AG04450 (cell line): ENCODE measurements at regions of chr2 and their contacts with region 1.

Region 1: DNA sequence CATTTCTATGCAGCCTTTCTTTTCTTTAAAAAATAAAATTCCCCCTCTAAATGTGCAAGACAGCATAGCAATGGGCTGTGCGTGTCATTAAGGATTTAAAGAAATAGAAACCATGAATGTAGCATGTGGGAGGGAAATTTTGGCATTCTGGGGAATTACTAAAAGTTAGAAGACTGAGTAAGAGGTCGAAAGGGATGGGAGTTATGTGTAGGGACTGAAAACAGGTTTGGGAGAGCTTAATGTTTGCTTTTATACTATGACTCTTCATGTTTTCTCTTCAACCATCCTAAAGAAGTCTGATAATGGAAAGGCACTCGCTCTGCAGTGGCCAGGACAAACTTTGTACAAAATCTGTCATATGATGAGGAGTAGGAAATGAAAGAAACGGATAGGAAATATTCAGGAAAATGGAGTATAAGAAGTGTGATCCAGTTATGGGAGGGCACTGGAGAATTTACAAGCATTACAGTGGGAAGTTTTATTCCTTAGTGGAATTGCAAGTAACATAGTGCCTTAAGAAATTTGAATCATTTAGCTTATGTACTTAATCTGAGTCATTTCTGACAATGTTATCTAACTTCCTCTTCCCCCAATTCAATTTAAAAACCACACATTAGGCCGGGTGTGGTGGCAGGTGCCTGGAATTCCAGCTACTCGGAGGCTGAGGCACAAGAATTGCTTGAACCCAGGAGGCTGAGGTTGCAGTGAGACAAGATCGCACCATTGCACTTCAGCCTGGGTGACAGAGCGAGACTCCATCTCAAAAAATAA is 20.6 kb downstream of the TMEM87B start:
- DNase-seq: no peak
- H3K4me3 ChIP-seq: no peak overlapping the region
- H3K27ac ChIP-seq: no peak overlapping the region
- H3K27me3 ChIP-seq: no peaks in the 10 kb centered on the region
- CTCF ChIP-seq: no peak

Region 2: GRCh38 chr2:112121682-112122254 is 46.1 kb after region 1 on chr2:
- CTCF ChIA-PET with region 1: interaction called, 10 read pairs
- POLR2A ChIA-PET with region 1: no interaction called
- DNase-seq: peak; percentile 18
- H3K4me3 ChIP-seq: no peak overlapping the region
- H3K27ac ChIP-seq: no peak overlapping the region
- H3K27me3 ChIP-seq: no peaks in the 10 kb centered on the region
- CTCF ChIP-seq: peak; percentile 65